MCF 10A (cell line): ENCODE measurements at regions of chr7 and their contacts with region 1.

Region 1: GRCh38 chr7:130069978-130070860 is at the start of gene KLHDC10:
- DNase-seq: peak; percentile 98
- H3K4me3 Mint-ChIP-seq: peak within 1 kb of the TSS; percentile 87
- H3K27ac Mint-ChIP-seq: peak within 1 kb of the TSS; percentile 73
- H3K4me1 Mint-ChIP-seq: peaks cover 32% of the 10 kb centered on the region
- H3K27me3 Mint-ChIP-seq: no peaks in the 10 kb centered on the region
- CTCF ChIP-seq: no peak
- total RNA-seq, gene KLHDC10: 25.8 and 36.9 TPM in 2 replicates

Region 2: DNA sequence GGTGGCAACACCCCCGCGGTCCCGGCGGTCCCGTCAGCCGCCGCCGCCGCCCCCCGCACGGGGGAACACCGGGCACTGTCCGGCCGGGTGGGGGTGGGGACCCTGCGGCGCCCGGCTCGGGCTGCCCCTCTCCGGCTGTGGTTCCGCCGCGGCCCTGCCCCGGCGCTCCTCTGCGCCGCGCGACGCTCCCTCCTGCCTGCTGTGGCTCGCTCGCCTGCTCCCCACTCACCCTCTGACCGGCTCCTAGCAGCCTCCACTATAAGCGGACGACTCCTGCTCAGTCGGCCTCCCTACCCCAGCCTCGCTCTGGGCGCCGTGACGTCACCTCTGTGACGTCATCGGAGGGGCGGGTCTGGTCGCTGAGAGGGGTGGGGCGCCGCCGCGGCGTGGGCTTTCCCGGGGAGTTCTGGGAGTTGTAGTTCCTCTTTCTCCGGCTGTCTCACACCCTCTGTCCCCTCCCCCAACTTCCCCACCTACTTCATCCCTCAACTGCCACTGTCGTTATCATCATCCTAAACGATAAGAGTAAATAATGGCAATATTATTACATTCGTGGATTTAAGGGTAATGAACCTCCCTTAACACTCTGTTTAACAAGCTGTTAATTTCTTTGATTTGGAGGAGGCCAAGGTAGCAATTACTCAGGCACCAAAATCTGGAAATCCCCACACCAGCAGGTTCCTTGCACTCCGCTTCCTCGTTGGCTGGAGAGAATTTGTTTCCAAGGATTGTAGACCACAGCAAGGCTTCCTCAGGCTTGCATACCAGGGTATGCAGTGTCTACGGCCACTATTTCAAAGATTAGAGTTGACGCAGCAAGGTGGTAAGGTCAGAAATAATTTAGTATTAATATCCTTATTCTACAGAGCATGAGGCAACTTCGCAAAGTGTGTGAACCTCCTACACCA is 117.3 kb before region 1 on chr7 and contains the start of gene UBE2H:
- CTCF ChIA-PET with region 1: no interaction called
- POLR2A ChIA-PET with region 1: interaction called, 13 read pairs
- intact Hi-C with region 1: no loop called
- DNase-seq: peak; percentile 92
- H3K4me3 Mint-ChIP-seq: no peak within 1 kb of the TSS
- H3K27ac Mint-ChIP-seq: no peak within 1 kb of the TSS
- H3K4me1 Mint-ChIP-seq: peaks cover 9% of the 10 kb centered on the region
- H3K27me3 Mint-ChIP-seq: no peaks in the 10 kb centered on the region
- CTCF ChIP-seq: no peak
- total RNA-seq, gene UBE2H: 128 and 130 TPM in 2 replicates

Region 3: GRCh38 chr7:130084037-130084875 is 14.0 kb after region 1 on chr7:
- CTCF ChIA-PET with region 1: interaction called, 26 read pairs
- POLR2A ChIA-PET with region 1: interaction called, 8 read pairs
- intact Hi-C with region 1: no loop called
- DNase-seq: peak; percentile 71
- H3K4me3 Mint-ChIP-seq: no peak overlapping the region
- H3K27ac Mint-ChIP-seq: no peak overlapping the region
- H3K4me1 Mint-ChIP-seq: peaks cover 22% of the 10 kb centered on the region
- H3K27me3 Mint-ChIP-seq: no peaks in the 10 kb centered on the region
- CTCF ChIP-seq: peak; percentile 29

Region 4: GRCh38 chr7:130205084-130205947 is 135.1 kb after region 1 on chr7 and contains the start of gene TMEM209:
- CTCF ChIA-PET with region 1: interaction called, 4 read pairs
- POLR2A ChIA-PET with region 1: interaction called, 10 read pairs
- intact Hi-C with region 1: no loop called
- DNase-seq: peak; percentile 97
- H3K4me3 Mint-ChIP-seq: peak within 1 kb of the TSS; percentile 98
- H3K27ac Mint-ChIP-seq: peak within 1 kb of the TSS; percentile 99
- H3K4me1 Mint-ChIP-seq: peaks cover 12% of the 10 kb centered on the region
- H3K27me3 Mint-ChIP-seq: no peaks in the 10 kb centered on the region
- CTCF ChIP-seq: no peak
- total RNA-seq, gene TMEM209: 38.3 and 45.3 TPM in 2 replicates

Region 5: GRCh38 chr7:130486114-130486958 is 416.1 kb after region 1 on chr7:
- CTCF ChIA-PET with region 1: no interaction called
- POLR2A ChIA-PET with region 1: no interaction called
- intact Hi-C with region 1: loop called (anchors 10 kb)
- DNase-seq: peak; percentile 89
- H3K4me3 Mint-ChIP-seq: peak overlapping the region; percentile 93
- H3K27ac Mint-ChIP-seq: peak overlapping the region; percentile 91
- H3K4me1 Mint-ChIP-seq: peaks cover 33% of the 10 kb centered on the region
- H3K27me3 Mint-ChIP-seq: no peaks in the 10 kb centered on the region
- CTCF ChIP-seq: peak; percentile 83

Region 6: DNA sequence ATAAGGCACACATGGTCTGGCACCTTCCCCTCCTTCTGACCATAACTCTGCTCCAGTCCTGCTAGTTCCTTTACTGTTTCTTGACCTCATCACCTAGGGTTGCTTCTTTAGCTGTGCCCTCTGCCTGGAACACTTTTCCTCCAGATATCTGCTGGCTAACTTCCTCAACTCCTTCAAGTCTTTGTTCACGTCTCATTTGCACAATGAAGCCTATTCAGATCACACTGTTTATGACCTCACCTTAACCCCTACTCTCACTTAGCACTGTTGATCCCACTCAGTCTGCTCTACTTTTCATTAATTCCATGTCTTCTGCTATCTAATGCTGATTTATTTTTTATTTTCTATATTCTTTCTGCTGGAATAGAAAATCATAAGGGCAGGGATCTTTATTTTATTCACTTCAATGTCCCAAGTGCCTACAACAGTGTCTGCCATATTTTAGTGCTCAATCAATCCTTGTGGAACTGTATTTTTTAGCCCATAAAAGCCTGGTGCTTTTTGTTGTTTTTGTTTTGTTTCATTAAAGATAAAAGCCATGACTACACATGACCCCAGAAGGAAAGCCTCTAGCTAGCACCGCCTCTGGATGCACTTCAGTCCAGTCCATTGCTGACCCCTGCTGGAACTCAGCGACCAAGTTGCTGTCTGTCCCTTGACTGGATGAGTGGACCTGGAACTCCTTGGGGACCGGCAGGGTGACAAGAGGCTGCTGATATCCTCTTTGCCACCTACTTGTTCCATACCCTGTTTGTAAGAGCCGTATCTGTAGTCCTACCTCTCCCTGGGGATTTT is 651.5 kb after region 1 on chr7:
- CTCF ChIA-PET with region 1: interaction called, 3 read pairs
- POLR2A ChIA-PET with region 1: interaction called, 4 read pairs
- intact Hi-C with region 1: loop called (anchors 1 kb)
- DNase-seq: peak; percentile 62
- H3K4me3 Mint-ChIP-seq: no peak overlapping the region
- H3K27ac Mint-ChIP-seq: no peak overlapping the region
- H3K4me1 Mint-ChIP-seq: no peaks in the 10 kb centered on the region
- H3K27me3 Mint-ChIP-seq: peaks cover 18% of the 10 kb centered on the region
- CTCF ChIP-seq: peak; percentile 58

Region 7: DNA sequence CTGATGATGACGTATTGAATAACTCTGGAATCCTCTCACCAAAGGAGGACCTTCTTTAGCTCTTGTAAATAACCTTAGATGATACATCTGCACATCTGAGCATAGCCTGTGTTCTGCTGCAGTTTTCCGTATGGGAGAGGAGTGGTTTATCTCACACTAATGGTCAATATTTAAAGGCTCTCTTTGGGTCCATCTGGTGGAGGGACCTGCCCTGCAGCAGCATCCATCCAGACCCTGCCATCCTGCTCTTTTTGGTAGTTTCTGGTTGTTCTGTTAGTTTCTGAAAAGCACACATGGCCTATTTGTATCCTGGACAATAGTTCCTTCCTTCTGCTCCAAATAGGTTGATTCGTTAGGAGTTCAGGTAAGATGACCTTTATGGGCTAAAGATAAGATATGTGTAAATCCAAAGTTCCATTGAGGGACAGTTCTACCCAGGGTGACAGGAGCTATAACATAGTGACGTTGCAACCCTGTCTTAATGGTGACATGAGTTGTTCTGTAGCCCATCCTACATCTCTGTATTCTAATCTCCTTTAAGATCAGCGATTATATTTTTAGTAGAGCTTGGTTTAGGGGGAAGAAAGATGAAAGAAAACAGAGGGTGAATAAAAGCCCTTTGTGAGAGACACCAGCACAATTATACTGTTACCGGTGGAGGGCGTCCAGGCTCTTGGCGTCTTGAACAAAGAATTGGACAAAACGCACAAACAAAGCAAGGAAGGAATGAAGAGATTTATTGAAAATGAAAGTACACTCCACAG is 723.8 kb after region 1 on chr7:
- CTCF ChIA-PET with region 1: interaction called, 3 read pairs
- POLR2A ChIA-PET with region 1: no interaction called
- intact Hi-C with region 1: loop called (anchors 1 kb)
- DNase-seq: peak; percentile 56
- H3K4me3 Mint-ChIP-seq: peak overlapping the region; percentile 69
- H3K27ac Mint-ChIP-seq: peak overlapping the region; percentile 94
- H3K4me1 Mint-ChIP-seq: peaks cover 14% of the 10 kb centered on the region
- H3K27me3 Mint-ChIP-seq: no peaks in the 10 kb centered on the region
- CTCF ChIP-seq: no peak